ENCODE measurements at regions of chr21 and their contacts with region 1.

Region 1: DNA sequence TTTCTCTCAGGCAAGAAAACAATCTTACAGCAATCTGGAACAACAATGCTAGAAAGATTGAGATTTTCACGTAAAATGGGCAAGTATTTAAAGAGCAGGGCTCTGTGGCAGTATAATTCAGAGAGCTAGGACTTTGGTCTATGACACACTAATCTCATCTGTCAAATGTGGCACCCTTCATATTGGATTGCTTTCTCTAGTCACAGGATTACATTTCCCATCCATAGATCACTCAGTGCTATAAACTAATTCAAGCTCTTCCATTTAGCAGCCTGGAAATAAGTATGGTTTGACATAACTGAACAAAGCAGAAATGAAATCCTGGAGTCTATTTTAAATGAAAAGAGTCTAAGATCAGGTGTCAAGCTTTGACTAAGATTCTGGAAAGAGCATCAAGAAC is 263.1 kb upstream of the TMPRSS15 start:
- DNase-seq: no peak
- ATAC-seq: no peak
- H3K4me3 ChIP-seq: no peak overlapping the region
- H3K27ac ChIP-seq: no peak overlapping the region
- H3K4me1 ChIP-seq: no peaks in the 10 kb centered on the region
- H3K27me3 ChIP-seq: no peaks in the 10 kb centered on the region
- CTCF ChIP-seq: no peak

Region 2: DNA sequence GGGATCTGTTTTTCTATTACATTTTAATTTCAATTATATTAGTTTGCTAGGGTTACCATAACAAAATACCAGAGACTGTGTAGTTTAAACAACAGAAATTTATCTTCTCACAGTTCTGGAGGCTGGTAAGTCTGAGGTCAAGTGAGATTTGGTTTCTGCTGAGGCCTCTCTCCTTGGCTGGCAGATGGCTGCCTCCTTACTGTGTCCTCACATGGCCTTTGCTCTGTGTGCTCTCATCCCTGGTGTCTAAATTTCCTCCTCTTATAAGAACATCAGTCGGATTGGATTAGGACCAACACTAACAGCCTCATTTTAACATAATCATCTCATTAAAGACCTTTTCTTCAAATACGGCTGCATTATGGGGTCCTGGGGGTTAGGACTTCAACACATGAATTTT is 617.3 kb before region 1 on chr21:
- CTCF ChIA-PET with region 1: no interaction called
- POLR2A ChIA-PET with region 1: no interaction called
- in situ Hi-C with region 1: no loop called
- intact Hi-C with region 1: no loop called
- DNase-seq: no peak
- ATAC-seq: no peak
- H3K4me3 ChIP-seq: no peak overlapping the region
- H3K27ac ChIP-seq: no peak overlapping the region
- H3K4me1 ChIP-seq: no peaks in the 10 kb centered on the region
- H3K27me3 ChIP-seq: no peaks in the 10 kb centered on the region
- CTCF ChIP-seq: no peak

Region 3: GRCh38 chr21:18677632-18678031 is 10.9 kb after region 1 on chr21:
- CTCF ChIA-PET with region 1: interaction called, 13 read pairs
- POLR2A ChIA-PET with region 1: no interaction called
- in situ Hi-C with region 1: no loop called
- intact Hi-C with region 1: no loop called
- DNase-seq: no peak
- ATAC-seq: no peak
- H3K4me3 ChIP-seq: no peak overlapping the region
- H3K27ac ChIP-seq: no peak overlapping the region
- H3K4me1 ChIP-seq: no peaks in the 10 kb centered on the region
- H3K27me3 ChIP-seq: no peaks in the 10 kb centered on the region
- CTCF ChIP-seq: no peak